A673 (cell line): ENCODE measurements at regions of chrX and their contacts with region 1.

Region 1: GRCh38 chrX:110665223-110666002 is 130.2 kb downstream of the CHRDL1 start:
- DNase-seq: peak; percentile 66
- H3K4me3 ChIP-seq: no peak overlapping the region
- H3K27ac ChIP-seq: no peak overlapping the region
- H3K4me1 ChIP-seq: no peaks in the 10 kb centered on the region
- H3K27me3 ChIP-seq: no peaks in the 10 kb centered on the region
- CTCF ChIP-seq: peak; percentile 75

Region 2: DNA sequence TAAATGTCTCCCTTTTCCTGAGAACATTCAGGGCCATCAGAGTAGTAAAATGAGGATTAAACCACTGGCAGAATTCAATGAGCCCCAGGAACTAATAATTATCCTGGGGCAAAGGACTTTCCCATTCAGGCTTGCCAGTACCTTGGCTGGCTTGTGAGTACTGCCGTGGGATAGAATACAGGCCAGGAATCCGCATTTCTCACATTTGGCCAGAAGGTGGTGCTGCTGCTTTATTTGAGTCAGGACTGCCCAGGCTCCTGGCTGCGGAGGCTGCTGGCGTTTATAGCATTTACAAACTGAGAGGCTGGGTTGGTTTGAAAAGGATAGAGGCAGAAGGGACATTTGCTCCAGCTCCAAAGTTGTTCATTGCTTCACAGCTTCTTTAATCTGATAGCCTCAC is 215.4 kb before region 1 on chrX:
- CTCF ChIA-PET with region 1: no interaction called
- POLR2A ChIA-PET with region 1: no interaction called
- intact Hi-C with region 1: loop called (anchors 1 kb)
- DNase-seq: peak; percentile 84
- H3K4me3 ChIP-seq: no peak overlapping the region
- H3K27ac ChIP-seq: no peak overlapping the region
- H3K4me1 ChIP-seq: no peaks in the 10 kb centered on the region
- H3K27me3 ChIP-seq: peaks cover under 1% of the 10 kb centered on the region
- CTCF ChIP-seq: peak; percentile 80

Region 3: GRCh38 chrX:110462957-110463356 is 202.5 kb before region 1 on chrX:
- CTCF ChIA-PET with region 1: no interaction called
- POLR2A ChIA-PET with region 1: no interaction called
- intact Hi-C with region 1: loop called (anchors 5 kb)
- DNase-seq: no peak
- H3K4me3 ChIP-seq: no peak overlapping the region
- H3K27ac ChIP-seq: no peak overlapping the region
- H3K4me1 ChIP-seq: peaks cover 4% of the 10 kb centered on the region
- H3K27me3 ChIP-seq: no peaks in the 10 kb centered on the region
- CTCF ChIP-seq: peak; percentile 49

Region 4: DNA sequence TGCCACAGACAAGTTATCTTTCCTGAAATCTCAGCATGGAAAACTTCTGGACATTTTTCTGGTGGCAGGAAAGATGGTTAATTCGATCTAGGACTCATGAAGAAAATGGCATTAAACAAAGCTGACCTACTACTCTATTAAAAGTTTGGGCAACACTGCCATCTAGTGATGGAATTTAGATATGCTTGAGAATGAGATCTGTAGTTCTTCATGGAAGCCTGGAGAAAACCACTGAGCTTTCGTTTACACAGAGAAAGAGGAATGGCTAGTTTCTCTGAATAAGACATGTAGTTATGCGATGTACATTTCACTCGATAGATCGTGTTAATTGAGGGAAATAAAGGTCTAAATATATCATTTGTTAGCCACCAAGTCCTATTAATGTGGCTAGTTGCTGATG is 181.9 kb after region 1 on chrX:
- CTCF ChIA-PET with region 1: interaction called, 3 read pairs
- POLR2A ChIA-PET with region 1: no interaction called
- intact Hi-C with region 1: loop called (anchors 5 kb)
- DNase-seq: peak; percentile 77
- H3K4me3 ChIP-seq: no peak overlapping the region
- H3K27ac ChIP-seq: no peak overlapping the region
- H3K4me1 ChIP-seq: no peaks in the 10 kb centered on the region
- H3K27me3 ChIP-seq: no peaks in the 10 kb centered on the region
- CTCF ChIP-seq: peak; percentile 67